ENCODE measurements at regions of chr17 and their contacts with region 1.

Region 1: DNA sequence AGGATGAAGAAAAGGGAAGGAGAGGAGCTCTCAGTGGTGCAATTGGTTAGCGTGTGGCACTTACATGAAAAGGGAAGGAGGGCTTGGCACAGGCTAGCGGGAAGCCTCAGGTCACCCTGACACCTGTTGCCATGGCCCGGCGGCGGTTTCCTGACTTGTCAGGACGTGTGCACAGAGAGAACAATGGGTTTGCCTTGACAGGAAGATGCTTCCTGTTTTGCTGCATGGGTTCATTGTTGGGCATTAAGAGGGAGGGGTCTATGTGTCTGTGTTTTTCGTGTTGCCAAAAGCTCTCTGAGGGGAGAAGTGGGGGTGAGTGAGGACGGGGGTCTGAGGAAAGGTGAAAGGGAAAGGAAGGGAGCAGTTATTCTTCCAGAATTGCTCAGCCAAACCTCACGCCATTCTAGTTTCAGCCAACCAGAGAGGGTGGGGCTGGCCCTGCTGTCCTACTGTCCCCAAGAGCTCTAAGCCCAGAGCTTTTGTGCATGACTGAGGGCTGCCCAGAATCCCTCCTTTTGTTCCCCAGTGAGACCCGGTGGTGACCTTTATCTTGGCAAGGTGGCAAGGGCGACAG is 17.1 kb upstream of the CCR7 start:
- DNase-seq: peak; percentile 76
- ATAC-seq: peak; percentile 87
- H3K4me3 Mint-ChIP-seq: peak overlapping the region; percentile 75
- H3K27ac Mint-ChIP-seq: peak overlapping the region; percentile 95
- H3K4me1 Mint-ChIP-seq: peaks cover 73% of the 10 kb centered on the region
- H3K27me3 Mint-ChIP-seq: no peaks in the 10 kb centered on the region

Region 2: DNA sequence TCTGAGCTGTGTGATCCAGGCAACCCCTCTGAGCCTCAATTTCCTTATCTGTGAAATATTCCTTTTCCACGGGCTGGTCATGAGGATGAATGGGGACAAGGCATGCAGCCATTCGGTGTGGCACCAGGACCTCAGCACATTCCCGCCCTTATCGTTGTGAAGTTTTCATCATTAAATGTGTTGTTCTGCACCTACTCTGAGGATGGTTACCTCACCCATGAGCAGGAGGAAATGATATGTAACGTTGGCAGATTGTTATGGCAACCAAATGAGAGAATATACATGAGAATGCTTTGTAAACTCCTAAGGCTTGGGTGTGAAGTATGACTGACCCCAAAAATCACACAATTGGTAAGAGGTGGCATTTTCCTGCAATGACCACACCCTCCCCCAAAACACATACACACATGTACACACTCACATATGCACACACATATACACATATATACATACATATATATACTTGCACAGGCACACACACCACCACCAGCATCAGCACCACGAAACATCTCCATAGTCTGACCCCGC is 25.7 kb after region 1 on chr17:
- POLR2A ChIA-PET with region 1: interaction called, 31 read pairs
- DNase-seq: no peak
- ATAC-seq: peak; percentile 53
- H3K4me3 Mint-ChIP-seq: peak overlapping the region; percentile 64
- H3K27ac Mint-ChIP-seq: peak overlapping the region; percentile 87
- H3K4me1 Mint-ChIP-seq: peaks cover 83% of the 10 kb centered on the region
- H3K27me3 Mint-ChIP-seq: no peaks in the 10 kb centered on the region